AG04450 (cell line): ENCODE measurements at regions of chr10 and their contacts with region 1.

Region 1: DNA sequence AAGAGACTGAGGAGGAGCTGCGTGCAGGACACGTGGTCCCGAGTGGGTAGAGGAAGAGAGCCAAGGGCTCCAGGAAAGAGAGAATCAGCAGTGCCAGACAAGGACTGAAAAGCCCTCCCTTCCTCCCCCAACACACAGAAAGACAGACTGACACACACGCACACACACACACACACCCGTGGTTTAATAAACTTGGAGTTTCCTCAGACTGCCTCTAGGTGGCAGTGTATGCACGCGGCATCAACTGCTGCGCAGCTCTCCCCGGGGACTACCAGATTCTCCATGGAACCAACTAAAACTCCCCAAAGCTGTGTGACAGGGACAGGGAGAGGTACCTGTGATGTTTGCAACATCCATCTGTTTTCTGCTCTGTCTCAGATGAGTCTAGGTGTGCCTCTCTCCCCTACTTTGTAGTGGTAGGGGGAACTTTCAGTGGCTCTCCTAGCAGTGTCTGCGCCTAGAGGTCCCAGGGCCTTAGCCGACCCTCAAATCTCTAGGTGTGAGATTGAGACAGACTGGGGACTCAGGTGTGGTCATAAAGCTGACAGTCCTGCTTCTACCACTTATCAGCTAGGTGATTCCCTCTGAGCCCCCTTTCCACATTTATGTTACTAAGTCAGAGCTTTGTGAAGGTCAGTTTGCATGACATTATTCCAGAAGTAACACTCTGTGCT is 9.3 kb upstream of the TSPAN14 start:
- DNase-seq: no peak
- H3K4me3 ChIP-seq: no peak overlapping the region
- H3K27ac ChIP-seq: no peak overlapping the region
- H3K27me3 ChIP-seq: no peaks in the 10 kb centered on the region
- CTCF ChIP-seq: peak; percentile 92

Region 2: DNA sequence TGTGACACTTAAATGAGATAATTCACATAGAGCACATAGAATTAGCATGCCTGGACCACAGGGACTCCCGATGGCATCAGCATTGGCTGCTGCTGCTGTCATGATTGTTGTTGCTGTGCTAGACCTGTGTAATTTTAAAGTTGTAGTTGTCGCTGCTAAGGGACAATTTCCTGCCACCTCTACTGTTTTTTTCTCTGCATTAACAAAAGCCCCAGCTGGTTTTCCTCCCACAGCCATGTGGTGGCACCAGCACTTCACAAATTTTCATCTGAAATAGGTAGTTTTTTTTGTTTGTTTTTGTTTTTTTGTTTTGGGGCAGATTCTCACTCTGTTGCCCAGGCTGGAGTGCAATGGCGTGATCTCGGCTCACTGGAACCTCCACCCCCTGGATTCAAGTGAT is 61.8 kb before region 1 on chr10:
- CTCF ChIA-PET with region 1: interaction called, 12 read pairs
- POLR2A ChIA-PET with region 1: no interaction called
- DNase-seq: no peak
- H3K4me3 ChIP-seq: no peak overlapping the region
- H3K27ac ChIP-seq: no peak overlapping the region
- H3K27me3 ChIP-seq: peaks cover 3% of the 10 kb centered on the region
- CTCF ChIP-seq: peak; percentile 60

Region 3: DNA sequence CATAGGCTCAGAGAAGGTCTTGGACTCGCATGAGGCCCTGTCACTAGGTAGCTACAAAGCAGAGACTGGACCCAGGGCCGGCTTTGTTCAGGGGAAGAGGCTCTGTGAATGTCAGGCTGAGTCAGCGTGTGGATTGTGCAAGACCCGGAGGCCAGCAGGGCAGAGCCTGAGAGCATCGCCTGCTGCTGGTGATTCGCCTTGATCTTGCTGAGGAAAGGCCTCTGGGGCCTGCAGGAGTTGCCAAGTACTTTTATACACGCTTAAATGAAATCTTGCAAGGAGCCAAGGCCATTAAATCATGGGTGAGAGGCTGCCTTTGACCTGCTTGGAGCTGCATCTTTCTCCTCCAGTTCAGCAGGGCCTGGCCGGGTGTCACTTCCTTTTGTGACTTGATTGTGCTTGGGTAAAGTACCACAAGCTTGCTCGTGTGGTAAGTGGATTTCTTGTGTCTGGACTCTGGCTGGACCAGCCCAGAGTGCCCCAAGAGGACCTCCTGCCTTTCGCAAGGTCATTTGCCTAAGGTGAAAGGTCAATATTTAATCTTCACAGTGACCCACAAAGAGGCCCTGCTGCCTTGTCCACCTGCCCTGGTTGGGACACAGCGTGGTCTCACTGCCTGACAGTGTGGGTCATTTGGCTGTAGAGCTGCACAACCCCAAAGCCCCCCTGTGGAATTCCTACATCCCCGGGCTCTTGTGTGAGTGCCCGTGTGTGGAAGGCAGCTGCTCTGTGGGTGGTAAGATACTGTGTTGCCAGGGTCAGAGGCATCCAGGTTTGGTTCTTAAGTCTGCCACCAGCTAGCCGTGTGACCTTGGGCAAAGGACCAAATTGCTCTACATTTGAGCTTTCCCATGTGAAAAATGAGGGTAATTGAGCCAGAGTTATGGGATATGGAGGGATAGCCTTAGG is 54.3 kb after region 1 on chr10:
- CTCF ChIA-PET with region 1: interaction called, 128 read pairs
- POLR2A ChIA-PET with region 1: no interaction called
- DNase-seq: peak; percentile 92
- H3K4me3 ChIP-seq: no peak overlapping the region
- H3K27ac ChIP-seq: peak overlapping the region; percentile 91
- H3K27me3 ChIP-seq: no peaks in the 10 kb centered on the region
- CTCF ChIP-seq: peak; percentile 28

Region 4: DNA sequence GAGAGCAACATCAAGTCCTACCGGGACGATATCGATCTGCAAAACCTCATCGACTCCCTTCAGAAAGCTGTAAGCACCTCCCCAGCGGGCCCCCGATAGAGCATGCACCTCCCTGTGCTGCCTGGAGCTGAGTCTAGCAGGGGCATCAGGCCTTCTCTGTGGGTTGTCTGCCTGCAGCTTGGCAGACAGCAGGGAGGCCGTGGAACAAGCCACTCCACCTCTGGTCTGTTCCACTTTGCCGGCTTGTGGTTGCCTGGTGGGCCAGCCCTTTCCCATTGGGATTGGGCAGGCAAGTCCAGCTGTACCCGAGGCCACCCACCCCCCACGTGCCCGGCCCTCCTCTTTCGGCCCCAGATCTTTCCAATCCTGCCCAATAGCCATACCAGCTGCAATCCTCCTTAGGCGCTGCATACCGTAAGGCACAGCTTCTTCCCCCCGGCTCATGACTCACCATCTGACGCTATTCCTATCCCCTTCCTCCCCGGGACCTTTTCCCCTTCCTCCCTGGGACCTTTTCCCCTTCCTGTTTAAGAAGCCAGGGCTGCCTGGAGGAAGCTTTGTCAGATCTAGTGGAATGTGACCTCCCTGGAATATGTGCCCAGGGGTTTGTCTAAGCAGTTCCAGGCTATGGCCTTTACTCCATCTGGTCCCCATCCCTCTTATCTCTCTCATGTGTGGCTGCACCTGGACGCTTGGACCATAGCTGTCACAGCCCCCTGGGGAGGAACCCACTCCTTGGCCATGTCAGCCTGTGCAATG is 64.8 kb after region 1 on chr10:
- CTCF ChIA-PET with region 1: interaction called, 128 read pairs
- POLR2A ChIA-PET with region 1: interaction called, 3 read pairs
- DNase-seq: peak; percentile 29
- H3K4me3 ChIP-seq: no peak overlapping the region
- H3K27ac ChIP-seq: peak overlapping the region; percentile 78
- H3K27me3 ChIP-seq: no peaks in the 10 kb centered on the region
- CTCF ChIP-seq: no peak

Region 5: DNA sequence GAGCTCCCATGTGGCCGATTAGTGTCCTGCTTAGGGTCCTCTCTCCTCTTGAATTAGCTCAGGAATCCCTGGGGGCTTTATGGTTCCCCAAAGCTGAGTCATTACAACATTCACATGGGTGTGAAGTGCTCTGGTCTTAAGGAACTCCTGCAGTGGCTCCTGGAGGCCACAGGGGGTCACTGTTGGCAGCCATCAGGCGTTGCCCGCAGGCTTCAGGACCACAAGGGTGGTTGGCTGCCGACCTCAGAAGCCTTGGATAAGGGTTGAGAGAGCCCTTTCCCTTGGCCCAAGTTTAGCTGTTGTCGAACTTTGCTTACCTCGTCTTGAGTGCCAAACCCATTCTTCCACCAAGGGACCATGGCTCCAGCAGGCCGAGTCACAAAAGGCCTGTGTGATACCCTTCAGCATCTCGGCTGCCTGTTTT is 154.7 kb after region 1 on chr10:
- CTCF ChIA-PET with region 1: interaction called, 13 read pairs
- POLR2A ChIA-PET with region 1: no interaction called
- DNase-seq: no peak
- H3K4me3 ChIP-seq: no peak overlapping the region
- H3K27ac ChIP-seq: no peak overlapping the region
- H3K27me3 ChIP-seq: no peaks in the 10 kb centered on the region
- CTCF ChIP-seq: peak; percentile 56

Region 6: DNA sequence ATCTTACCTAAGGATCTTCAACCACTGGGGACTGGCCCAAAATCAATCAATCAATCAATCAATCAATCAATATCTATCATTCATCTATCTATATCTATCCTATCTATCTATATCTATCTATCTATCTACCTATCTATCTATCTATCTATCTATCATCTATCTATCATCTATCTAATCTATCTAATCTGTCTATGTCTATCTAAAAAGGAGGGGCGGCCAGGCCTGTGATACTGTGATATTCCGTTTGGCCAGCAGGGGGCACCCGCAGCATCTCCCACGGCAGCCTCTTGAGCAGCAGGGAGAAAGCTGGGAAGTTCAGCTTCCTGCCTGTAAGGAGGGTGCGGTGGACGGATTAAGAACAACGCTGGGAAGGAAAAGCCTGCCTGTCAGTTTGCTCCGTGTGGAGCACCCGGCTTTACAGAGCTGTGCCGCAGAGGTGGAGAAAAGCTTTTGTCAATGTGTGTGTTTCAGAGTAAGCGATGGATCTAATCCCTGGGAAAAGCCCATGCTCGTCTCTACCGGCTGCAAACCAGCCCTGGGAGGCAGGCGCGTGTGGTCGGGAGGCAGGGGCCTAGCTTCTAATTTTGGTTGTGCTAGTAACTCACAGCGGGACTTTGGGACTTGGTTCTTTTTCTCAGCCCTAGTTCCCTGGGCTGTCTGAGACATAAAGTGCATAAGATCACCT is 217.9 kb after region 1 on chr10:
- CTCF ChIA-PET with region 1: interaction called, 34 read pairs
- POLR2A ChIA-PET with region 1: no interaction called
- DNase-seq: peak; percentile 47
- H3K4me3 ChIP-seq: peak overlapping the region; percentile 41
- H3K27ac ChIP-seq: no peak overlapping the region
- H3K27me3 ChIP-seq: no peaks in the 10 kb centered on the region
- CTCF ChIP-seq: peak; percentile 84

Region 7: DNA sequence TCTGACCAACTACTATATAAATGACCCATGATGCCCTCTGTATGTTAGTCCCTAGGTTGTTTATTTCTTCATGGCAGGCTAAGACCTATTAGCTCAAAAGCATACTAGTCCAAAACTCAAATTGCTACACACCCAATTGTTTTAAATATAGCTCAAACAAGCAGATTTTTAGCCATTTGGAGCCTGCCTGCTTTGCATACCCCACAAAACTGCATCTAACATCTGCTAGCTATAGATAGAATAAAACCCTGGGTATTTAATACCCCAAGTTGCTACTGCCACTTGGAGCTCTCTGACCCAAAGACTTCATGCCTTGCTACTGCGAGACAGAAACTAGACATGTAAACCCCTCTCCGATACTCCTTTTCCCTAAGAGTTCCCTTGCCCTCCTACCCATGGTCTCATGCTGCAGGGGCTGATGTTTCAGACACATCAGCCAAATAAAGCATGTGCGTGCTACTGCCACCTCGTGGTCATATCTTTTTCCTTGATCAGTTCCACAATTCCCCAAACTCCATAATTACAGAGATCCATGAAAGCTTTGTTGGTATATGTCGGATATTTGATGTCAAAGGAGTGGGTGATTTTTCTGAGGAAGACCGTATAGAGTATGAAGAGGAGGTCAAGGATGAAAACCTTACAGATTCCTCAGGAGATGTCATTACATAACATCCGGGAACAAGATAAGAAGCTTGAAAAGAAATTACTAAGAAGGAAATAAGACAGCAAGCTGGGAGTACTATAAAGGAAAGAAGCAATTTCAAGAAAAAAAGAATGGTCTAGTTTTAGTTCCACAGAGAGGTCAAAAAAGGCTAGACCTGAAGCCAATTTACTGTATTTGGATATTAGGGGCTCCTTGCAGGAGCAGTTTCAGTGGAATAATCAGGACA is 479.5 kb after region 1 on chr10:
- CTCF ChIA-PET with region 1: interaction called, 12 read pairs
- POLR2A ChIA-PET with region 1: no interaction called
- DNase-seq: no peak
- H3K4me3 ChIP-seq: no peak overlapping the region
- H3K27ac ChIP-seq: no peak overlapping the region
- H3K27me3 ChIP-seq: no peaks in the 10 kb centered on the region
- CTCF ChIP-seq: peak; percentile 24; the same call in 1 of the 2 replicates